ENCODE measurements at regions of chr15 and their contacts with region 1.

Region 1: GRCh38 chr15:68817304-68818065 is 3.2 kb downstream of the ANP32A start:
- DNase-seq: peak in 1 of 2 experiments; percentile 67
- H3K4me3 ChIP-seq: peak overlapping the region; percentile 95
- H3K4me3 Mint-ChIP-seq: peak overlapping the region; percentile 100
- H3K27ac Mint-ChIP-seq: peak overlapping the region; percentile 96
- H3K4me1 ChIP-seq: peaks cover 28% of the 10 kb centered on the region
- H3K4me1 Mint-ChIP-seq: peaks cover 18% of the 10 kb centered on the region
- H3K27me3 ChIP-seq: no peaks in the 10 kb centered on the region
- H3K27me3 Mint-ChIP-seq: no peaks in the 10 kb centered on the region
- CTCF ChIP-seq: no peak

Region 2: DNA sequence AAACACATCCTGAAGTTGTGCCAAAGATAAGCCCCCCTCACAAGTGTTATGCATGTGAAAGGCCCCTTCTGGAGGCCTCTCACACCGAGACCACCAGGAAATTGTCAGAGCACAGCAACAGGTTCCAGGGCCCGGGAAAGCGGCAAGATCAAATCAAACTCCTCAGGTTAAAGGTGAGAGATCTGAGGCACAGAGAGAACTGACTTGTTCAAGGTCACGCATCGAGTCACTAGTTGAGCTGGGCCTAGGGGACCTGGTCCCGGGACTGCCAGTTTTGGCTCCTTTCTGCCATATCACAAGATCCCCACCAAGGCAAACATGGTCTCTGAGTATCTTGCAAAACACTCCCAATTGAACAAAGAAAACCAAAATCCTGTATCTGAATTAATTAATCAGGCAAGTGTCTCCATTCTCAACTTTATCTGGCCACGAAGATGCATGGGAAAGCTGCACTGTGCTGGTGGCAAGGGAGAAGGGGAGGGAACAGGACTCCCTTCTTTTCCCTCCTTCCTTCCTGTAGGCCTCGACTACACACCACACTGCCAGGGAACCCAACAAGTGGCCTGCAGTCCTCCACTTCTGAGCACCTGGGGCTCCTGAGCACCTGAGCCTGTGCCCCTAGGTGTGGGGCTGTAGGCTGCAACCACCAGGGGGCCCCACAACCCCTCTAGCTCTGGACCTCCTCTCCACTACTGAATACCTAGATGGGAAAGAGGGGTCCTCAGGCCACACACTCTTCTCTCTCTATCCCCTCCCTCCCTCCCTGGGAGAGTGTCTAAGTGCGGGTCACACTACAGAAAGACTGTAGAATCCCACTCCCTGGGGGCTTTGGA is 34.0 kb before region 1 on chr15:
- CTCF ChIA-PET with region 1: interaction called, 4 read pairs
- POLR2A ChIA-PET with region 1: no interaction called
- intact Hi-C with region 1: loop called (anchors 1 kb)
- DNase-seq: peak; percentile 48 to 70
- H3K4me3 ChIP-seq: no peak overlapping the region
- H3K4me3 Mint-ChIP-seq: no peak overlapping the region
- H3K27ac Mint-ChIP-seq: no peak overlapping the region
- H3K4me1 ChIP-seq: peaks cover 17% of the 10 kb centered on the region
- H3K4me1 Mint-ChIP-seq: peaks cover 11% of the 10 kb centered on the region
- H3K27me3 ChIP-seq: no peaks in the 10 kb centered on the region
- H3K27me3 Mint-ChIP-seq: no peaks in the 10 kb centered on the region
- CTCF ChIP-seq: peak; percentile 64 to 81